ENCODE measurements at regions of chrX and their contacts with region 1.

Region 1: GRCh38 chrX:153763989-153764755 is at the start of gene PLXNB3:
- DNase-seq: peak; percentile 78 to 91 (median 91)
- ATAC-seq: peak; percentile 73 to 79
- H3K4me3 ChIP-seq: no peak within 1 kb of the TSS
- H3K27ac ChIP-seq: no peak within 1 kb of the TSS
- H3K4me1 ChIP-seq: no peaks in the 10 kb centered on the region
- H3K27me3 ChIP-seq: no peaks in the 10 kb centered on the region
- total RNA-seq, gene PLXNB3: 7.0 to 10.9 (median 9.5) TPM

Region 2: GRCh38 chrX:153361781-153362397 is 402.3 kb before region 1 on chrX:
- intact Hi-C with region 1: no loop called
- DNase-seq: no peak
- ATAC-seq: no peak
- H3K4me3 ChIP-seq: no peak overlapping the region
- H3K27ac ChIP-seq: no peak overlapping the region
- H3K4me1 ChIP-seq: no peaks in the 10 kb centered on the region
- H3K27me3 ChIP-seq: no peaks in the 10 kb centered on the region

Region 3: GRCh38 chrX:153953342-153953830 is 189.2 kb after region 1 on chrX:
- intact Hi-C with region 1: loop called in 3 of 4 experiments (anchors 2 to 10 kb)
- DNase-seq: peak; percentile 72 to 87 (median 87)
- ATAC-seq: peak; percentile 59 to 61
- H3K4me3 ChIP-seq: no peak overlapping the region
- H3K27ac ChIP-seq: peak overlapping the region; percentile 59
- H3K4me1 ChIP-seq: no peaks in the 10 kb centered on the region
- H3K27me3 ChIP-seq: no peaks in the 10 kb centered on the region

Measured in right cardiac atrium (tissue), 5 donors.